Mammary epithelial cell (primary cell): ENCODE measurements at regions of chr10 and their contacts with region 1.

Region 1: GRCh38 chr10:71285180-71285545 is 33.9 kb upstream of the SLC29A3 start:
- DNase-seq: peak; percentile 9
- H3K4me3 ChIP-seq: no peak overlapping the region
- H3K27ac ChIP-seq: no peak overlapping the region
- H3K4me1 ChIP-seq: no peaks in the 10 kb centered on the region
- H3K27me3 ChIP-seq: no peaks in the 10 kb centered on the region
- CTCF ChIP-seq: peak; percentile 64 to 74

Region 2: GRCh38 chr10:70903262-70903921 is 381.8 kb before region 1 on chr10:
- CTCF ChIA-PET with region 1: interaction called, 6 read pairs
- dilution Hi-C with region 1: loop called (anchors 5 kb)
- in situ Hi-C with region 1: no loop called
- intact Hi-C with region 1: loop called (anchors 1 kb)
- DNase-seq: peak; percentile 17
- H3K4me3 ChIP-seq: no peak overlapping the region
- H3K27ac ChIP-seq: no peak overlapping the region
- H3K4me1 ChIP-seq: no peaks in the 10 kb centered on the region
- H3K27me3 ChIP-seq: no peaks in the 10 kb centered on the region
- CTCF ChIP-seq: peak; percentile 81 to 92

Region 3: DNA sequence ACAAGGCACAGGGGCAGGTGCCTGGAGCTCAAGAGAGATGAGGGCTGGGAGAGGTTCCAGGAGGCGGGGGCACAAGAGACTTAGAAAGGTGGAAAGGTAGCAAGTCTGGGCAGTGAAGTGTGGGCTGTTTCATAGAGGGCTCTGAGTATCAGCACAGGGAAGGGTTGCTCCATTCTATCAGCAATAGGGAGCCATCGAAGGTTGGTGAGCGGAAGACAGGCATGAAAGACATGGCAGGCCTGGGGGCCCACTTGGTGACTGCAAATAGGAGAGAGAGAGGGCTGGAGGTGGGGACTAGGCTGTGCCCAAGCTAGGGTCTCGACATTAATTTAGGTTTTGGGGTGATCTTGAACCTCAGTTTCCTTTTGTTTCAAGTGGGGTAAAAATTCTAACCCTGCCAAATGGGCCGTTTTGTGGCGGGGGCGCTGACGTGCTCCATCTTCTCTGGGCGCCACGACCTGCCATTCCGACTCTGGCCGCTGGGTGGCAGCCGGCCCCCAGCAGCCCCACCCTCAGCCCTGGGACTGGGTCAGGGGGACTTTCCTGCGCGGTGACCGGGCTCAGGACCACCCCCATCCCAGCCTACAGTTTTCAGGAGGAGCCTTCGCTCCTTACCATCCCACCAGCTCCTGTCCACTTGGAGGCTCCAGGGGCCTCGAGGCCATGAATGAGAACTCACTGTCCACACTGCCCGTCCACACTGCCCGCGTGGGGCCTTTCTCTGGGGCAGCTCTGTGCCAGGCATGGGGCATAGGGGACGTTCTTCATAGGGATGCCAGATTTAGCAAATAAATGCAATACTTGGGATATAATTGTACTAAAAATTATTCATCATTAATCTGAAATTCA is 359.6 kb before region 1 on chr10:
- CTCF ChIA-PET with region 1: no interaction called
- dilution Hi-C with region 1: no loop called
- in situ Hi-C with region 1: loop called (anchors 5 kb)
- intact Hi-C with region 1: loop called (anchors 1 kb)
- DNase-seq: no peak
- H3K4me3 ChIP-seq: no peak overlapping the region
- H3K27ac ChIP-seq: no peak overlapping the region
- H3K4me1 ChIP-seq: peaks cover 6% of the 10 kb centered on the region
- H3K27me3 ChIP-seq: peaks cover 2% of the 10 kb centered on the region
- CTCF ChIP-seq: peak; percentile 79 to 96

Region 4: DNA sequence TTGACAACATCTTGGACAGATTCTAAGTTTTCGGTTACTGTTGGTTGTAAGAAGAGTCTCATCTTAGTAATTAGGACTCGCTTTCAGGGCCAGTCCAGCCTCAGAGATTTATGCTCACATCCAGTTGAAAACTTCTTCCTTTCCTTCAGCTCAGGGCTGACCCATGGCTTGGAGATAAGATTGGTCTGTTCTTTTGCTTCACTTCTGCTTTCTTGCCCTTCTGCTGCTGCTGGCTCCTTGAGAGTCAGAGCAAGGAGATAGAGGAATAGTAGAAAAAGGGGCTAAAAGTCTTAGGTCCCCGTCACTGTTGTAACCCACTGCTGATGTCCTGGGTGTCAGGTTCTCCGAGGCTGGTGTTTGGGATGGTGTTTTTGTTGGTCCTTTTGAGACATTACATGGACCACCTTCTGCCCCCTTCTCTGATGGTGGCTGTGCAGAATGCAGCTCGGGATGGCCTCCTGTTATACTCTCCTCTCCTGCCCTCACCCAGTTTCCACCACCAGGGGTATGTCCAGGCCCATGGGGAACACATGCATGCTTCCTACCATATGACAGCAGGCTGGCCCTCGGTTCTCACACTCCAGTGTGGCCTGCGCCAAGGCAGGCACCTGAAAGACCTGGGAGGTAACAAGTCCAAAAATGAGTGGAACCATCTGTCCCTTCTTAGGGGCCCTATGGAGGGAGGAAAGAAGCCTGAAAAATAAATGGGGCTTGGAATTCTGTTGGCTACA is 329.0 kb before region 1 on chr10:
- CTCF ChIA-PET with region 1: no interaction called
- dilution Hi-C with region 1: no loop called
- in situ Hi-C with region 1: no loop called
- intact Hi-C with region 1: loop called (anchors 1 kb)
- DNase-seq: no peak
- H3K4me3 ChIP-seq: no peak overlapping the region
- H3K27ac ChIP-seq: no peak overlapping the region
- H3K4me1 ChIP-seq: no peaks in the 10 kb centered on the region
- H3K27me3 ChIP-seq: peaks cover 3% of the 10 kb centered on the region
- CTCF ChIP-seq: peak in 1 of 2 donors; percentile 4